ENCODE measurements at regions of chr4 and their contacts with region 1.

Region 1: DNA sequence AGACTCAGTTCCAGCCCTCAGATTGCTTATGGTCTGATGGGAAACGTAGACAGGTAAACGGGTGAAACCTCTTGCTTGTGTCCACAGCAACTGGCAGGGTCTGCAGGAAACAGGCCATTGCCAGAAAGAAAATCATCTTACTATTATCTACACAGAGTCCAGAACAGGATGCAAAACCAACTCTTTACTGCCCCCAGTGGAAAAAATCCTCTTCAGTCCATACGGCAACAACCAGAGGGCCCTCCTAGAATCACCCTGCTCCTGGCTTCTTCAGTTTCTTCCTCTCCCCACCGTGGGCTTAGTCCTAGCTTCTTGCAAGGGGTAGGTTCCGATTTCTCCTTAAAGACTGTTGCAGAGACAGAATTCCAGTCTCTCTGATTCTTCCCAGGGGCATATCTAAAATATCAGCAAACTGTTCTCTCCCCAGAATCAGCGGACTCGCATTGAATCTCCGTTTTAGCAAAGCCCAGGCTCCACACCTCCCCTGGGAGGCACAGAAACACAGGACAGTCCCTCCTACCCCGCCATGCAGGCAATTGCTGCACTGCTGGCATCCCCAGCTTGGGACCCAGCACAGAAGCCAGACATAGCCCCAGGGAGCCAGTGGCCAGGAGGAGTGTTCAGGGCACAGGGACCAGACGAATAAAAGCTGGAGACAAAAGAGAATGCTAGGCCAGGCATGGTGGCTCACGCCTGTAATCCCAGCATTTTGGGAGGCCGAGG is 41.0 kb upstream of the SH3RF1 start:
- DNase-seq: no peak
- ATAC-seq: peak; percentile 67

Region 2: GRCh38 chr4:169345194-169345787 is 33.5 kb after region 1 on chr4:
- intact Hi-C with region 1: no loop called
- DNase-seq: no peak
- ATAC-seq: no peak

Region 3: DNA sequence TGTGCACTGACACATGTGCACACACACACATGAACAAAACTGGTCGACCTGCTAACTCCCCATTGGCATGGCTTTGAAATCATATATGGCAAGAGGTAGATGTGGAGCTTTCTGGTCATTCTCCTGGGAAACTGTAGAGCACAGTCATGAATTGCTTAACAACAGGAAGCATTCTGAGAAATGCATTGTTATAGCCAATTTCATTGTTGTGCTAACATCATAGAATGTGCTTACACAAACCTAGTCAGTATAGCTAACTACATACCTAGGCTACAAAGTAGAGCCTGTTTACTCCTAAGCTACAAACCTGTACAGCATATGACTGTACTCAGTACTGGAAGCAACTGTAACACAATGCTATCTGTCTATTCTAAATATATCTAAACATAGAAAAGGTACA is 93.2 kb after region 1 on chr4:
- intact Hi-C with region 1: loop called (anchors 5 kb)
- DNase-seq: no peak
- ATAC-seq: no peak

Measured in Right ventricle myocardium inferior (tissue), 1 donor.